Heart left ventricle (tissue), 16 donors: ENCODE measurements at regions of chr1 and their contacts with region 1.

Region 1: GRCh38 chr1:91754348-91754747 is 131.6 kb downstream of the TGFBR3 start:
- DNase-seq: no peak
- ATAC-seq: no peak
- H3K4me3 ChIP-seq: no peak overlapping the region
- H3K27ac ChIP-seq: peak overlapping the region in 10 of 12 donors; percentile 18 to 73 (median 58)
- H3K4me1 ChIP-seq: peaks cover 0 to 64% (median 31%) of the 10 kb centered on the region in 12 donors
- H3K27me3 ChIP-seq: no peaks in the 10 kb centered on the region
- CTCF ChIP-seq: no peak
- POLR2A ChIP-seq: no peak

Region 2: DNA sequence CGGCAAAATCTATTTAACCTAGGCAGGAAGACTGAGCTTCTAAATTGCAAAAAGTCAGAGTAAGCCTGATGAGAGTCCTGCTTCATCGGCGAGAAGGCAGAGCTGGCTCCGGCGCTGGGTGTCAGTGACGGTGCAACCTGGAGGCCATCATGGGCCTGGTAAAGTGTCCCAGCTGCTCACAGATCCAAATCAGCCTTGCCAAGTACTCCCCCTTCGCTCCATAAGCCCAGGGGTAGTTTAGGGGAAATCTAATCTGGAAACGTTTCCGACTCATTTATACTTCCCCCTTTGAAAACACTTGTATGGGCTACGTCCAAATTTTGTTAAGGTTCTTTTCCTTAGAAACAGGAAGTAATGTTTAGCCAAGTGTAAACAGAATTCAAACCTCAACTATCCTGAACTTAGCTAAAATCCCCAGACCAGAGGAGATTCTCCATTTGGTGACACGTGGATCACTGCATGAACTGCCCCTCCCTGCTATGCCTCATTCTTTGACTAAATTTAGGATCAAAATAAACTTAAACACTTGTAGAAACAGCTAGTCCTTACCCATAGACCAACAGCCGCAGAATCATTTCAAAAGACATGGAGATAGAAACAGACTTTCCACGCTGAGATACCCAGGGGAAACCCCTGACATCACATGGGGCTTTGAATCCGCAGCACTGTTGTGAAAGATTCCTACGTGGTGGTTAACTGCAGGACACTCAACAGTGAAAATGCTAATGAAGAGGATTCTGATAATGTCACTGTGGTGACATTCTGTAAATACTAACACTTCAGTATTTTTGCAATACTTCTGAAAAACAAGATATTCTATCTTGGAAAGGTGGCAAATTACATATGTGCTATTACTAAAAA is 41.1 kb before region 1 on chr1:
- intact Hi-C with region 1: loop called in 1 of 10 experiments (anchors 5 kb)
- DNase-seq: peak; percentile 48 to 80 (median 67)
- ATAC-seq: peak; percentile 73 to 85 (median 80)
- H3K4me3 ChIP-seq: peak overlapping the region in 7 of 12 donors; percentile 2 to 29 (median 11)
- H3K27ac ChIP-seq: peak overlapping the region; percentile 67 to 87 (median 81)
- H3K4me1 ChIP-seq: peaks cover 0 to 58% (median 22%) of the 10 kb centered on the region in 12 donors
- H3K27me3 ChIP-seq: no peaks in the 10 kb centered on the region
- CTCF ChIP-seq: no peak
- POLR2A ChIP-seq: no peak